Astrocyte of the cerebellum (primary cell): ENCODE measurements at regions of chr3 and their contacts with region 1.

Region 1: GRCh38 chr3:154690413-154690812 is 260.4 kb upstream of the GPR149 start:
- DNase-seq: no peak
- H3K4me3 ChIP-seq: no peak overlapping the region
- CTCF ChIP-seq: no peak

Region 2: DNA sequence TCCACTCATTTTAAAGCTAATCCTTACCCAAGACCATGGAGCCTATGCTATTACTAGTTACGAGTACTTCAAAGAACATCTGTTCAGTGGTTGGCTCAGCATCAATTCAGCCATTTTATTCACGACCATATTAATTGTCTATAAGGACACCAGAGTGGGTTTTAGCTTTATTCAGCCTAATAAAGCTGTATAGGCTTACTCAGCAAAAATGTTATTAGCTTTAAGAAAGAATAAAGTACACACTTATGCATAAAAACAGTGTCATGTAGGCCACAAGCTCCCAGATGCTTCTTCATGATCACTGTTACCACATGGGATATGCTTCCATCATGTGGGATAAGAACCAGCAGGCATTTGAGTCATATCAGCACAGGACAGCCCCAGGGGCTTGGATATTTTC is 173.0 kb before region 1 on chr3:
- in situ Hi-C with region 1: no loop called
- DNase-seq: no peak
- H3K4me3 ChIP-seq: no peak overlapping the region
- CTCF ChIP-seq: no peak

Region 3: GRCh38 chr3:154642145-154642544 is 48.3 kb before region 1 on chr3:
- in situ Hi-C with region 1: loop called (anchors 5 kb)
- DNase-seq: no peak
- H3K4me3 ChIP-seq: no peak overlapping the region
- CTCF ChIP-seq: no peak

Region 4: DNA sequence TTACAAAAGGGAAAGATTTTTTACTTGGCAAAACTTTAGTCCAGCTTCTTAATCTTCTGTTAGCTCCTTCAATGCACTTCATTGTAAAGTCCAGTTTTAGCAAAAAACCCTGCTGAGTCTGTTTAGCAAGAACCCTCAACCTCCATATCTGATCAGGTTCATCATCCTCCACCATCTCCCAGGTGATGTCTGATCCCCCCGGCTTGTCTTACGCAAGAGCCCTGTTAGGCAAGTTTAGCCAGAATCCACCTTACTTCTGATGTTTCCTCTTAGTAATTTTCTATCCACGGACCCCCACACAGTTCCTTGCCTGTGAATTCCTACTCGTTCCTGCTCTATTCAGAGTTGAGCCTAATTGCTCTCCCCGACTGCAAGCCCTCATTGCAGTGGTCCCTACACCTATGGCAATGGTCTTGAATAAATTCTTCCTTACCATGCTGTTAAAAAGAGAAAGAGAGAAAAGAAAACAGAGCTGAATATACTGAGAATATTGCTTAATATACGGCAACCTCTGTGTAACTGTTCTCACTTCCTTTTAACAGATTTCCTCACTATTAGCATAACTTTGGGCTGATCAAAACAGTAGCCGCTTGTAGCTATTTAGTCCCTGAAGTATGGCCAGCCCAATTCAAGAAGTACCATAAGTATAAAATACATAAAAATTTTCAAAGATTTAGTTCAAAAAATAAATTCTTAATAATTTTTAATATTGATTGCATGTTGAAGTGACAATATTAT is 311.0 kb after region 1 on chr3:
- in situ Hi-C with region 1: no loop called
- DNase-seq: no peak
- H3K4me3 ChIP-seq: no peak overlapping the region
- CTCF ChIP-seq: no peak